GM12878 (cell line): ENCODE measurements at regions of chr5 and their contacts with region 1.

Region 1: GRCh38 chr5:138464008-138464387 is 1.3 kb upstream of the EGR1 start:
- DNase-seq: peak; percentile 76
- ATAC-seq: peak; percentile 71
- H3K4me3 ChIP-seq: peak overlapping the region; percentile 80
- H3K27ac ChIP-seq: peak overlapping the region; percentile 98
- H3K4me1 ChIP-seq: peaks cover 19% of the 10 kb centered on the region
- H3K27me3 ChIP-seq: peaks cover 0 to 6% of the 10 kb centered on the region in 2 experiments; a peak in 1 of 4 replicates
- CTCF ChIP-seq: peak; percentile 79 to 81 (median 80)
- EP300 ChIP-seq: no peak
- POLR2A ChIP-seq: peak; percentile 80
- RAD21 ChIP-seq: peak; percentile 29; the same call in 1 of the 2 replicates

Region 2: DNA sequence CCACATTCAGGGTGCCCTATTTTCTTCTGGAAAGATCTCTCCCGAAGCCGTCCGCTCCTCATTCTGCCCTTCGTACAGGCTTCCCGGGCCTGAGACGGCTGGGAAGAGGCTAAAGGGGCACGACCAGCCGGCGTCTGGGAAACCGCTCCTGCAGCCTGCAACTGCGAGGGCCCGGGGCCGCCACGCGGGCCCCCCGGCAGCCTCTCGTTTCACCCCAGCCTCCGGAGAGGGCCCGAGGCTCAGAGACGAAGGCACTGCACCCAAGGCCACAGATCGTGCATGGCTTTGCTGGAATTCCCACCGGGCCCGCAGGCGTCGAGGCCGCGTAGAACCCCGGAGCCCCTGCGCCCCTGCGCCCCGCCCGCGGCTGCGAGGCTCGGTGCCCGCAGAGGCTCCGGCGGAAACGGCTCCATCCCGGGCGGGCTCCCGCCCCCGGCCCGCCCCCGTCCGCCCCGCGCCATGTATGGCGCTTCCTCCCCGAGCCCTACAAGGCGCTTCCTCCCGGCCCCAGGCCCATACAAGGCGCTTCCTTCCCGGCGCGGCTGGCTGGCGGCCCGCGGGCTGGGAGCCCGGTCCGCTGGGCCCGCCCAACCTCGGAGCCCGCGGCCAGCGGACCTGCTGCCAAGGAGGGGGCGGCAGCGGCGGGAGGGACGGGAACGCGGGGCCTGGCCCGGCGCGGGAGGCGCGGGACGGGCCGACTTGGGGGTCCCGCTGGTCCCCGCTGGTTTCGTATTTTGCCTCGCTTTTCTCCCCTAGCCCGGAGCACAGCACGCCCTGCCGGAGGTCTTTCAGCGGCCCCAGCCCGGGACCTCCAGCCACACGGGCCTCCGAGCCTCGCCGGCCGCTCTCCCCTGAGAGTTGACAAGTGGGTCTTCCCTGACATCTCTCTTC is 27.9 kb after region 1 on chr5:
- CTCF ChIA-PET with region 1: interaction called, 9 read pairs
- POLR2A ChIA-PET with region 1: interaction called, 4 read pairs
- RAD21 ChIA-PET with region 1: no interaction called
- SMC1A ChIA-PET with region 1: interaction called, 6 read pairs
- in situ Hi-C with region 1: no loop called
- intact Hi-C with region 1: loop called (anchors 1 kb)
- DNase-seq: peak; percentile 23
- ATAC-seq: peak; percentile 99
- H3K4me3 ChIP-seq: peak overlapping the region; percentile 60
- H3K27ac ChIP-seq: no peak overlapping the region
- H3K4me1 ChIP-seq: peaks cover 7% of the 10 kb centered on the region; the same call in 1 of the 2 replicates
- H3K27me3 ChIP-seq: peaks cover 3 to 9% of the 10 kb centered on the region in 2 experiments; a peak in 3 of 4 replicates
- CTCF ChIP-seq: no peak
- EP300 ChIP-seq: no peak
- POLR2A ChIP-seq: no peak
- RAD21 ChIP-seq: no peak

Region 3: DNA sequence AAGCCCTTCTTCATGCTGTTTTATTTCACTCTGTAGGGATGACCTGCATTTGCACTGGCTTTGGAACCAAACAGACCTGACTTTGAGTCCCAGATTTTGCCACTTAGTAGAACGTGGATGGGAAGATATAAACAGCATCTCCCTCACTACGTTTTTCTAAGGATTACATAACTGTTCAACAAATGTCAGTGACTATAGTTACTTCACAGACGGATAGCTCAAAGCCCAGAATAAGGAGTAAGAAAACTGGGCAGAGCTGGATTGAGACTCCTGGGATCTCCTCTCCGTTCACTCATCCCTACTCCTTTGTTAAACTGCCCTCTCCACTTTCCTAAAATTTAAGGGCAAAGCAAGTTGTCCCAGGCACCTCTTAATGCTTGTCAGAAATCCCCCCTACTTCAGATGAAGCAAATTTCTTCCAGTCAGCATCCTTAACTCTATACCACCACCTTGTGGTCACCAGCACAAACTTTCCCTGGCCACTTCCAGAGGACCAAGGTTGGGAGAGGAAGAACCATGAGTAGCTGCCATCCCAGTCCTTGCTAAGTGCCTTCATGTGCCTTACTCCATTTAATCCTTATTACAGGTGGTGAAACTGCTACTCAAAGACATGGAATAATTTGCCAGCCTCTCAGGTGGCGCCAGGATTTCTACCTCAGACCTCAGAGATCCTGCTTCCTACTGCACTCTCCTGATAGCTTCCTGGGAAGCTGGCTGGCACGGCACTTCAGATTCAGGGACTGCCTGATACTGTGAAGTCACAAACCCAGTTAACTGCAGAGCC is 39.7 kb after region 1 on chr5:
- CTCF ChIA-PET with region 1: interaction called, 38 read pairs
- POLR2A ChIA-PET with region 1: interaction called, 9 read pairs
- RAD21 ChIA-PET with region 1: interaction called, 10 read pairs
- SMC1A ChIA-PET with region 1: interaction called, 7 read pairs
- in situ Hi-C with region 1: no loop called
- intact Hi-C with region 1: no loop called
- DNase-seq: peak; percentile 17
- ATAC-seq: peak; percentile 82
- H3K4me3 ChIP-seq: no peak overlapping the region
- H3K27ac ChIP-seq: no peak overlapping the region
- H3K4me1 ChIP-seq: no peaks in the 10 kb centered on the region
- H3K27me3 ChIP-seq: no peaks in the 10 kb centered on the region
- CTCF ChIP-seq: peak; percentile 79 to 84 (median 82)
- EP300 ChIP-seq: no peak
- POLR2A ChIP-seq: peak; percentile 38; the same call in 1 of the 2 replicates
- RAD21 ChIP-seq: peak; percentile 82

Region 4: GRCh38 chr5:138542956-138543729 is 79.1 kb after region 1 on chr5 and contains the start of gene ETF1:
- CTCF ChIA-PET with region 1: interaction called, 5 read pairs
- POLR2A ChIA-PET with region 1: interaction called, 13 read pairs
- RAD21 ChIA-PET with region 1: interaction called, 12 read pairs
- SMC1A ChIA-PET with region 1: interaction called, 4 read pairs
- in situ Hi-C with region 1: no loop called
- intact Hi-C with region 1: loop called (anchors 1 kb)
- DNase-seq: peak; percentile 97
- ATAC-seq: peak; percentile 92
- H3K4me3 ChIP-seq: peak within 1 kb of the TSS; percentile 99
- H3K27ac ChIP-seq: peak within 1 kb of the TSS; percentile 100
- H3K4me1 ChIP-seq: peaks cover 17% of the 10 kb centered on the region
- H3K27me3 ChIP-seq: no peaks in the 10 kb centered on the region
- CTCF ChIP-seq: no peak
- EP300 ChIP-seq: 0 out of 4 replicates have a peak, but pooled peaks have one; percentile 6 to 7
- POLR2A ChIP-seq: peak; percentile 86
- RAD21 ChIP-seq: no peak
- polyA plus RNA-seq, gene ETF1: 29.8 to 44.9 TPM

Region 5: GRCh38 chr5:138932171-138932810 is 468.3 kb after region 1 on chr5:
- CTCF ChIA-PET with region 1: no interaction called
- POLR2A ChIA-PET with region 1: no interaction called
- RAD21 ChIA-PET with region 1: no interaction called
- SMC1A ChIA-PET with region 1: no interaction called
- in situ Hi-C with region 1: no loop called
- intact Hi-C with region 1: no loop called
- DNase-seq: no peak
- ATAC-seq: no peak
- H3K4me3 ChIP-seq: no peak overlapping the region
- H3K27ac ChIP-seq: no peak overlapping the region
- H3K4me1 ChIP-seq: no peaks in the 10 kb centered on the region
- H3K27me3 ChIP-seq: no peaks in the 10 kb centered on the region
- CTCF ChIP-seq: 0 out of 6 replicates have a peak, but pooled peaks of 1 of the 3 experiments have one; percentile 14
- EP300 ChIP-seq: no peak
- POLR2A ChIP-seq: peak; percentile 29; the same call in 1 of the 2 replicates
- RAD21 ChIP-seq: 0 out of 2 replicates have a peak, but pooled peaks have one; percentile 13

Region 6: GRCh38 chr5:139262742-139263445 is 798.9 kb after region 1 on chr5:
- CTCF ChIA-PET with region 1: no interaction called
- POLR2A ChIA-PET with region 1: no interaction called
- RAD21 ChIA-PET with region 1: no interaction called
- SMC1A ChIA-PET with region 1: no interaction called
- in situ Hi-C with region 1: no loop called
- intact Hi-C with region 1: loop called (anchors 10 kb)
- DNase-seq: peak; percentile 40
- ATAC-seq: peak; percentile 99
- H3K4me3 ChIP-seq: no peak overlapping the region
- H3K27ac ChIP-seq: no peak overlapping the region
- H3K4me1 ChIP-seq: peaks cover 5% of the 10 kb centered on the region
- H3K27me3 ChIP-seq: no peaks in the 10 kb centered on the region; a peak in 1 of 4 replicates
- CTCF ChIP-seq: peak; percentile 83 to 93 (median 85)
- EP300 ChIP-seq: no peak
- POLR2A ChIP-seq: no peak
- RAD21 ChIP-seq: peak; percentile 99